Sciatic nerve (tissue), 2 donors: ENCODE measurements at regions of chr14 and their contacts with region 1.

Region 1: GRCh38 chr14:50954811-50955372 is 10.6 kb upstream of the PYGL start:
- DNase-seq: no peak
- ATAC-seq: peak; percentile 88

Region 2: GRCh38 chr14:49427117-49427516 is 1527.8 kb before region 1 on chr14:
- intact Hi-C with region 1: no loop called
- DNase-seq: no peak
- ATAC-seq: no peak

Region 3: DNA sequence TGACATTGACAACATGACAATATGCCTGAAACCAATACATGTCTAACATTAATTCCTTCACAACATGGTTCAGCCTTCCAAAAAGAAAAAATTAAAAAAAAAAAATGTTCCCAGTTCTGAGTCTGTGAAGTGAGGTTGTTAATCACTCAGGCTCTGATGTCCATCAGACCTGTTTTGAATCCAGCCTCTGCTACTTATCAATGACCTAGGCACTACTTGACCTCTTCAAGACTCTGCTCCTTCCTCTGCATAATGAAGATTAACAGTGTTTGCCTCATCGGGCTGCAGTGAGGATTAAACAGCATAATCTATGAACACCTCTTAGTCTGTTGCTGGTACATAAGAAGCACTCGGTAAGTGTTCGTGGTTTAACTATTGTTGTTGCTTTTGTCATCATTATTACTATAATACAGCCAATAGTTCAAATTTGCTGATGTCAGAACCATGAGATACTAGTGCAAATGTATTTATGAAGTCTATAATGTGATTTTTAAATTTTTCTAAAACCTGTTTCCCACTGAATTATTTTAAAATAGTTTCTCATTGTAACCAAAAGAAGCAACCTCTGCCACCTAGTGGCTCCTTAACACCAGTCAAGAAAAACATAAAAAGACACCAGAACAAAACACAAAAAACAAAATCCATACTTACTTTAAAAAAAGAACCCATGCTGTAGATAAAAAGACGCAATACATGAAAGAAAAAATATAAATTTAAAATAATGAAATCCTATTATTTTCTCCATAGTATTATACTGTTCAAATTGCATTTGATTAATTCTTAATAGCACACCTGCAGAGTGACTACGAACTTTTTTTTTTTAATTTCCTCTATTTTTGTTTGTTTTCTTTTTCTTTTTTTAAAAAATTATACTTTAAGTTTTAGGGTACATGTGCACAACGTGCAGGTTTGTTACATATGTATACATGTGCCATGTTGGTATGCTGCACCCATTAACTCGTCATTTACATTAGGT is 264.9 kb after region 1 on chr14:
- intact Hi-C with region 1: loop called (anchors 10 kb)
- DNase-seq: no peak
- ATAC-seq: no peak